BJ (cell line): ENCODE measurements at regions of chr4 and their contacts with region 1.

Region 1: DNA sequence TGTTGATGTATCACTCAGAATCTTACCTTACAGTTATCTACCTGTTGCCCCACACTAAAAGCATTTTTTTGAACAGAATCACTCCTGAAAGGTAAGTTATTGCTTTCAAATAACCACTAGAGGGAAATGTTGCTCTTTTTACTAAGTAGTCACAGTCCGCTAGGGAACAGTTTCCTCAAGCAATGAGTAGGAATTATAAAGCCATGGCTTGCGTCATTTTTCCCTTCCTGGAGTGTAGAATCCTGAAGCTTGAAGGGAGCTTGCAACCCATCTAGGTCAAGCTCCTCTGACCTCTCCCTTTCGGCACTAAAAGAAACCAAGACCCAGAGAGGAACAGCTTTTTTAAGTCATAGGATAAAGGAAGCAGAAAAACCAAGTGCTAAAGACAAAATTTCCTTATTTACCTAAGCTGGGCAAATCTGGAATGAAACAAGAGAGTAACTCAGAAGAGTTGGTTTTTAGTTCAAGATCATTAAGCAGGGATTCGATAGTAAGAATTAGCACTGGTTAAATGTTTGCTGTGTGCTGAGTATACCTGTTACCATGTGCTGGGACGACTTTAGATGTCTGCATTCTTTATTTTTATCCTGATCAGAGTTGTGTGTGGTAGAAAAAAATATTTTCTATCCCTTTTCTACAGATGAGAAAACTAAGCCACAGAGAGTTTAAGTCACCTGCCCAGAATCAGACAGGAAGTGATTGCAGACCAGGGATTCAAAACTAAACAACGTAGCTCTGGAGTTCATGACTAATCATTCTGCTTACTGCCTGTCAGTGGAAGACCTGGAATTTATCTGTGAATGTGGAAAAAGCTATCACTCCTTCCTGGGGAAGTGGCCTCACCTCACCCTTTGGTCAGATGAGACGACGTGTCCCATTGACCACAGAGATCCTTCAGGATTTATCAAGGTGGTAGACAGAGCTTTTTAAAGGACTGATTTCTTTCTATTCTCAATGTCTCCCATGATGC is 631.5 kb downstream of the RAB28 start:
- DNase-seq: peak; percentile 14
- H3K4me3 ChIP-seq: no peak overlapping the region
- H3K27me3 ChIP-seq: no peaks in the 10 kb centered on the region
- CTCF ChIP-seq: peak; percentile 45

Region 2: GRCh38 chr4:13548984-13549546 is 696.4 kb after region 1 on chr4:
- CTCF ChIA-PET with region 1: interaction called, 33 read pairs
- POLR2A ChIA-PET with region 1: no interaction called
- DNase-seq: no peak
- H3K4me3 ChIP-seq: peak overlapping the region; percentile 39
- H3K27me3 ChIP-seq: peaks cover 17% of the 10 kb centered on the region
- CTCF ChIP-seq: peak; percentile 87